GM12878 (cell line): ENCODE measurements at regions of chr1 and their contacts with region 1.

Region 1: DNA sequence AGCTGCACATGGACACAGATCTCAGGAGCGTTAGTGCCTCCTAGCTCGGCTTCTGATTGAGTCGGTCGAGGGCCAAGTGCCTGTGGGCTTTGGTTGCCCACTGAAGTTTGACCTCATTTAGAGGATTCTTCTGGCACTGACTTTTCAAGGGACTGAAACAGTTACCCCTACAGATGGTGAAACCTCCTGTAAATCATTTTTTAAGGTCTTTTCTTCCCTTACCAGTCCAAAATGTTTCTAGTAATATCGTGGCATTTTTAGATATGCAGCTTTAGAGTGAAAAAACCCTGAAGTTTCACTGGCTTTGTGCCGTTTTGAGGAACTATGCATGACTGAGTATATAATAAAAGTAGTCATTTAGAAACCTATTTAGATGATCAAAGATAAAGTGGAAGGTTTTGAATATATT is 34.7 kb upstream of the L1TD1 start:
- DNase-seq: no peak
- ATAC-seq: peak; percentile 85
- H3K4me3 ChIP-seq: no peak overlapping the region
- H3K27ac ChIP-seq: no peak overlapping the region
- H3K4me1 ChIP-seq: peaks cover 6% of the 10 kb centered on the region
- H3K27me3 ChIP-seq: no peaks in the 10 kb centered on the region
- CTCF ChIP-seq: no peak
- EP300 ChIP-seq: no peak
- POLR2A ChIP-seq: no peak
- RAD21 ChIP-seq: no peak

Region 2: DNA sequence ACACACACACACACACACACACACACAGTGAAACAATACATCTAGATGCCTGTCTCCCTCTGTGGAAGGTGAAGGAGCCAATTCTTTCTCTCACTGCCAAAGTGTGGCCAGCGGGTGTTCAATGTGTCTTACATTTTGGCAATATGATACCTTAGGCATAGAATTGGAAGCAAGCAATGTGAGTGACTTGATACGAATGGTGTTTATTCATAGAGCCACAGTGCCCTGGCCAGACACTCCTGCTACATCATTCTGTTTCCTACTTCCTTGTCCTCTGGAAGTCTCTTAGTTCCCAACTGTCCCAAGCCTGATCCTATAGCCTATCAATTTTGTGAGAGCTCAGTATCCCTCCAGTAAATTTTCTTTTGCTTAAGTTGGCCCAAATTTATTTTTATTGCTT is 135.3 kb before region 1 on chr1:
- CTCF ChIA-PET with region 1: no interaction called
- POLR2A ChIA-PET with region 1: no interaction called
- RAD21 ChIA-PET with region 1: no interaction called
- SMC1A ChIA-PET with region 1: no interaction called
- in situ Hi-C with region 1: no loop called
- intact Hi-C with region 1: no loop called
- DNase-seq: no peak
- ATAC-seq: no peak
- H3K4me3 ChIP-seq: no peak overlapping the region
- H3K27ac ChIP-seq: no peak overlapping the region
- H3K4me1 ChIP-seq: no peaks in the 10 kb centered on the region
- H3K27me3 ChIP-seq: no peaks in the 10 kb centered on the region
- CTCF ChIP-seq: no peak
- EP300 ChIP-seq: no peak
- POLR2A ChIP-seq: no peak
- RAD21 ChIP-seq: no peak

Region 3: DNA sequence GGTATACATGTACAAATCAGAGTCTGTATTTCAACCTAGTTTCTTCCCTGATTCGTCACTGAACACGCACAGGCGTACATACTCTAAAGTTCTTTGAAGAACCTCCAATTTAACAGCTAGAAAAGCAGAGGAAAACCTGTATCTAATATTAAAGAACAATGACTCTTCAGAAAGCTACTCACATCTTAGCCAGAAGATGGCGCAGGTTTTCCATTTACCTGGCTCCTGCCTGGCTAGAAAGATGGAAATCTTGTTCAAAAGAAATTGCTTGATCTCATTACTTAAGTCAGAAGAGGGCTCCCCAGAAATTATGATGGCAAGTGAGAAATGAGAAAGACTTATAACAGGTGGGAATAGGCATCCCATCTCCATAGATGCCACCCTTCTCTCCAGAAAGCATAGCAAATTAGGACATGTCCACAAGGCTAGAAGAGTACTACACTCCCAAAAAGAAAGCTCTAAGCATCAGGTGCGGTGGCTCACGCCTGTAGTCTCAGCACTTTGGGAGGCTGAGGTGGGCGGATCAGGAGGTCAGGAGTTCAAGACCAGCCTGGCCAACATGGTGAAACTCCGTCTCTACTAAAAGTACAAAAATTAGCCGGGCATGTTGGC is 15.7 kb after region 1 on chr1:
- CTCF ChIA-PET with region 1: interaction called, 11 read pairs
- POLR2A ChIA-PET with region 1: no interaction called
- RAD21 ChIA-PET with region 1: no interaction called
- SMC1A ChIA-PET with region 1: interaction called, 4 read pairs
- in situ Hi-C with region 1: no loop called
- intact Hi-C with region 1: no loop called
- DNase-seq: no peak
- ATAC-seq: peak; percentile 75
- H3K4me3 ChIP-seq: no peak overlapping the region
- H3K27ac ChIP-seq: no peak overlapping the region
- H3K4me1 ChIP-seq: no peaks in the 10 kb centered on the region
- H3K27me3 ChIP-seq: no peaks in the 10 kb centered on the region
- CTCF ChIP-seq: peak; percentile 64 to 71 (median 69); a peak in 5 of 6 replicates
- EP300 ChIP-seq: no peak
- POLR2A ChIP-seq: no peak
- RAD21 ChIP-seq: peak; percentile 88